ENCODE measurements at regions of chr6 and their contacts with region 1.

Region 1: GRCh38 chr6:36015666-36016065 is 8.8 kb downstream of the SLC26A8 start:
- DNase-seq: no peak
- H3K4me3 ChIP-seq: no peak overlapping the region
- H3K27ac ChIP-seq: no peak overlapping the region
- H3K4me1 ChIP-seq: no peaks in the 10 kb centered on the region
- H3K27me3 ChIP-seq: no peaks in the 10 kb centered on the region
- CTCF ChIP-seq: no peak
- POLR2A ChIP-seq: no peak

Region 2: GRCh38 chr6:36000451-36000850 is 15.2 kb before region 1 on chr6:
- CTCF ChIA-PET with region 1: interaction called, 4 read pairs
- POLR2A ChIA-PET with region 1: no interaction called
- dilution Hi-C with region 1: no loop called
- intact Hi-C with region 1: loop called (anchors 1 kb)
- DNase-seq: no peak
- H3K4me3 ChIP-seq: no peak overlapping the region
- H3K27ac ChIP-seq: no peak overlapping the region
- H3K4me1 ChIP-seq: no peaks in the 10 kb centered on the region
- H3K27me3 ChIP-seq: no peaks in the 10 kb centered on the region
- CTCF ChIP-seq: no peak
- POLR2A ChIP-seq: no peak

Measured in endothelial cell of umbilical vein (primary cell).